HEK293 (cell line): ENCODE measurements at regions of chr7 and their contacts with region 1.

Region 1: DNA sequence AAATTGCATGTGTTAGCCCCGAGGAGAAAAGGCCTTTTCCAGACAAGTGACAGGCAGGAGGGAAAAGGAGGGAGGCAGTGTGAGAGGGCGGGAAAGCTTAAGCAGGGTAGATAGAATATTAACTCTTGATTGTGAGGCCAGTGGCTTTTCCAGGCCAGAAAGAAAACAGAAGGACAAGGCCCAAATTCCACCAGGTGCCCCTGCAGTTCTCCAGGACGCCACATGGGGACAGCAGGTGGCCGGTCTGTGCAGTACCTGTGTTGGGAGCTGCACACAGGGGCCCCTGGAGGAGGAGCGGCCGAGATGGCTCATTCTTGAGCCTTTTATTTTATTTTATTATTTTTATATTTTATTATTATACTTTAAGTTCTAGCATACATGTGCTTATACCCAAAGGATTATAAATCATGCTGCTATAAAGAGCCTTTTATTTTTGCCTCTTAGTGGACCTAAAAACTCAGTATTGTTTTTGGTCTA is 141.3 kb upstream of the KLF14 start:
- H3K4me3 ChIP-seq: no peak overlapping the region
- H3K27ac ChIP-seq: no peak overlapping the region
- H3K4me1 ChIP-seq: peaks cover 4% of the 10 kb centered on the region
- CTCF ChIP-seq: peak; percentile 70

Region 2: DNA sequence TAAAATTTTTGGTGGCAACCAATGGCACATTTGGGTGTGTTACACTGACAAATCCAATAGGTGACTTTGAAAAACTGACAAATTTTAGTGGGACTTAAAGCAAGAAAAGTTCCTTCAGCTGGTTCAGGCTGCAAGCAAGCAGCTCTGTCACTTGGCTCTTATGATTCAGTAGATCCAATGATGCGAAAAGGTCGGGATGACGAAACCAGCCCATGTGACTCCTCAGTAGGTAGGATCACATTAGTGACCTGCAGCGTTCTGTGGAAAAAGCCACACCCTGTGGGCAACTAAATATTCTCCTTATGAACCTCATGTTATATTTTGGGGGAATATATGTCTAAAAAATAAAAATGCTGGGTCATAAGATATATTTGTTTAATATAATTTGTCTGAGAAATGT is 175.6 kb before region 1 on chr7:
- CTCF ChIA-PET with region 1: no interaction called
- POLR2A ChIA-PET with region 1: no interaction called
- H3K4me3 ChIP-seq: no peak overlapping the region
- H3K27ac ChIP-seq: no peak overlapping the region
- H3K4me1 ChIP-seq: no peaks in the 10 kb centered on the region
- CTCF ChIP-seq: no peak

Region 3: GRCh38 chr7:130887182-130888016 is 12.1 kb after region 1 on chr7:
- CTCF ChIA-PET with region 1: interaction called, 14 read pairs
- POLR2A ChIA-PET with region 1: no interaction called
- H3K4me3 ChIP-seq: no peak overlapping the region
- H3K27ac ChIP-seq: no peak overlapping the region
- H3K4me1 ChIP-seq: no peaks in the 10 kb centered on the region; the same call in 1 of the 2 replicates
- CTCF ChIP-seq: no peak

Region 4: DNA sequence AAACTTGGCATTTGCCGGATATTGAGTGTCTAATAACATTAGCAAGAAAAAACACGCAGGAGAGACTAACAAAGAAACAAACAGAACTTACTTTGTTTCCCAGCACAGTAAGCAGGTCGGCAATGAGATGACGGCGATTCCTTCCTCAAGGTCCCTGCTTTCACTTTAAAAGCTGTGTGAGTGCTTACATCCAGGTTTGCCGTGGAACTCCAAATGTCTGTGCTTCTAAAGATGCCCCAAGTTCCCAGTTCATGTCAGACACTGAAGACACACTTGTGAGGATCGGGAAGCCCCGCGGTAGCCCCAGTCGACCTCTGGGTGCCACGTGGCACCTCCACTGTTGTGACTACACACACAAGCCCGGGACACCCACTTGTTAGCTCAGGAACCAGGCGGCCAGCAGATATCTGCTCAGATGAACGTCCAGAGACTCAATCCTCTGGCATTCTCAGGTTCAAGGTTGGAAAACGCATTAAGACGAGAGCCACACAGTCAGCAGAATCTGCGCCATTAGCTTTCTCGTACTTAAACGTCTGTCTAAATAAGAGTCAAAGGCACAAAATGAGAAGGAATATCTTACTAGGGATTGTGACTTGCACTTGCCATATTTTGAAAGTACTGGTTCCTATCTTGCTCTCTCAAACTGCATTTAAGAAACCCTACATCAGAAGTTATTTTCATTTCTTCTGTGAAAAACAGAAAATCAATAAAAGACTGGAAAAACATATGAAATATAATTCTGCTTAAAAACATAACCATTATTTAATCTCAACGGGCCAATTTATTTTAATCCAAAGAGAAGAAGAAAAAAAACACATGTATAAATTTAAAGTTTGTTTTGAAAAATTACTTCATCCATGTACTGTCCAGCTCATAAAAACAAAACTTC is 66.3 kb after region 1 on chr7:
- CTCF ChIA-PET with region 1: no interaction called
- POLR2A ChIA-PET with region 1: no interaction called
- H3K4me3 ChIP-seq: no peak overlapping the region; the same call in 1 of the 2 replicates
- H3K27ac ChIP-seq: peak overlapping the region; percentile 0; the same call in 1 of the 2 replicates
- H3K4me1 ChIP-seq: 0 out of 2 replicates have a peak, but pooled peaks cover 3% of the 10 kb centered on the region
- CTCF ChIP-seq: no peak

Region 5: GRCh38 chr7:130996841-130997231 is 121.5 kb after region 1 on chr7:
- CTCF ChIA-PET with region 1: interaction called, 10 read pairs
- POLR2A ChIA-PET with region 1: no interaction called
- H3K4me3 ChIP-seq: no peak overlapping the region
- H3K27ac ChIP-seq: peak overlapping the region; percentile 27; the same call in 1 of the 2 replicates
- H3K4me1 ChIP-seq: peaks cover 17% of the 10 kb centered on the region
- CTCF ChIP-seq: no peak

Region 6: GRCh38 chr7:131007394-131008330 is 132.4 kb after region 1 on chr7:
- CTCF ChIA-PET with region 1: interaction called, 11 read pairs
- POLR2A ChIA-PET with region 1: no interaction called
- H3K4me3 ChIP-seq: no peak overlapping the region
- H3K27ac ChIP-seq: no peak overlapping the region
- H3K4me1 ChIP-seq: peaks cover 12% of the 10 kb centered on the region
- CTCF ChIP-seq: peak; percentile 82

Region 7: DNA sequence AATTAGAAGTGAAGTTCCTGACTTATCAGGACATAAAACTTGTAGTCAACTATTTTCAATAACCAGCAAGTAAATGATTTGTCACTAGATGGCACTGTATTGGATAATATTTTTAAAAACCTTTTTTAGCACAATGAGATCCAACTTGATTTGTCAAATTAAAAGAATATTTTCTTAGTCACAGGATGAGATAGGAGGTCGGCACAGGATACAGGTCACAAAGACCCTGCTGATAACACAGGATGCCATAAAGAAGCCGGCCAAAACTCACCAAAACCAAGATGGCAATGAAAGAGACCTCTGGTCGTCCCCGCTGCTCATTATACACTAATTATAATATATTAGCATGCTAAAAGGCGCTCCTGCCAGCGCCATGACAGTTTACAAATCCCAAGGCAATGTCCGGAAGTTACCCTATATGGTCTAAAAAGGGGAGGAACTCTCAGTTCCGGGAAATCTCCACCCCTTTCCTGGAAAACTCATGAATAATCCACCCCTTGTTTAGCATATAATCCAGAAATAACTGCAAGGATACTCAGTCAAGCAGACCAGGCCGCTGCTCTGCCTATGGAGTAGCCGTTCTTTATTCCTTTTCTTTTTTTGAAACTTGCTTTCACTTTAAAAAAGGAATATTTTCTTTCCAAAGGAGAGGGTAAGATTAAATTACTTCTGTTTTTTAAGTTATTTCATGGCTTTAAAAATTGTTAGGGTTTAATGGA is 196.6 kb after region 1 on chr7:
- CTCF ChIA-PET with region 1: no interaction called
- POLR2A ChIA-PET with region 1: no interaction called
- H3K4me3 ChIP-seq: no peak overlapping the region
- H3K27ac ChIP-seq: no peak overlapping the region
- H3K4me1 ChIP-seq: no peaks in the 10 kb centered on the region; the same call in 1 of the 2 replicates
- CTCF ChIP-seq: no peak